WTC11 (cell line): ENCODE measurements at regions of chr3 and their contacts with region 1.

Region 1: DNA sequence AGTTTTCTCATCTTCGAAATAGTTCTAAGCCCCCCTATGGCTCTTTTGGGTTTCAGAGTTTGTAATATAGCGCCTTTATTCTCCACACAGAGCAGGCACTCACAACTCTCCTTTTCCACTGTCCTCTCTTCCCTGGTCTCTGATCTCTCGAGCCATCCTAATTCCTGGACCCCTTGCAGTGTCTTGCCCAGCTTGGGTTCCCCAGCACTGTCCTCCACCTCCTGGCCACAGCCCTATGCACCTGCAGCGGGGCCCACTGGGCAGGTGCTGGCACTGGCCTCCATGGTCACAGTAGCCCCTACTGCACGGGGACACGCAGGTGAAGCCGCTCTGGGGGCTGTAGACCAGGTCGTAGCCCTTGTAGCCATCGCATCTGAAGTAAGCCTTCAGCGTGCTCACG is 27.9 kb downstream of the MUC20 start:
- DNase-seq: no peak
- ATAC-seq: no peak
- H3K4me3 Mint-ChIP-seq: no peak overlapping the region
- H3K27ac Mint-ChIP-seq: no peak overlapping the region
- H3K4me1 Mint-ChIP-seq: no peaks in the 10 kb centered on the region
- H3K27me3 Mint-ChIP-seq: peaks cover 50% of the 10 kb centered on the region
- CTCF ChIP-seq: no peak

Region 2: DNA sequence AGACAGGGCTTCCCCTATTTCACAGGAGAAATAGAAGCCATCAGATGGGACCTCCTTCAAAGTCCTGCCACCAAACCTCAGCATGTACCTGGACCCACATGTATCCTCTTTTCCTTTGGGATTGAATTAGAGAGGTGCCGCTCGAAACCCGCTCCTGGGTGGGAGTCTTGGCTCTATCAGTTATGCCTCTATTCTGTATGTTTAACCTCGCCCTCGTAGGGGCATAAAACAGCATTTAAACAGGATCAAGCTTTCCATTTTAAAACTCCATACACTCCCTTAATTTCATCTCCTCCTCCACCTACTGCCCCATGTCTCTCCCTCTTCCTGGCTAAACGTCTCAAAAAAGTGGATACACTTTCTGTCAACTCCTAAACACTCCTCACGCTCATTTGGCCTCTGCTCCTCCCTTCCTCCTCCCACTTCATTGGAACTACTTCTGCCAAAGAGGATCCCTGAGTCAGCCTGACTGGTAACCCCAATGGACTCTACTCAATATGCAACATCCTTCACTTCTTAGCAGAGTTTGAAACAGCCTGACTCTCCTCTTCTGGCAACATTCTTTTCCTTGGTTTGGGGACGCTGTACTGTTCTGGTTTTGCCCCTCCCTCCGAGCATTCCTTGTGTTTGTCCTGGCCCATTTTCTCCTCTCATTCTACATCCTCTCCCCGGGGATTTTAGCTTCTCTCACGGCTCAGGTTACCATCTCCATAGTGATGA is 50.9 kb before region 1 on chr3:
- CTCF ChIA-PET with region 1: interaction called, 10 read pairs
- POLR2A ChIA-PET with region 1: no interaction called
- DNase-seq: no peak
- ATAC-seq: peak; percentile 69
- H3K4me3 Mint-ChIP-seq: peak overlapping the region; percentile 29
- H3K27ac Mint-ChIP-seq: peak overlapping the region; percentile 69
- H3K4me1 Mint-ChIP-seq: peaks cover 29% of the 10 kb centered on the region
- H3K27me3 Mint-ChIP-seq: no peaks in the 10 kb centered on the region; the same call in 1 of the 2 replicates
- CTCF ChIP-seq: no peak

Region 3: GRCh38 chr3:195716865-195717210 is 31.8 kb before region 1 on chr3:
- CTCF ChIA-PET with region 1: interaction called, 18 read pairs
- POLR2A ChIA-PET with region 1: no interaction called
- DNase-seq: no peak
- ATAC-seq: no peak
- H3K4me3 Mint-ChIP-seq: no peak overlapping the region
- H3K27ac Mint-ChIP-seq: no peak overlapping the region
- H3K4me1 Mint-ChIP-seq: peaks cover 36% of the 10 kb centered on the region
- H3K27me3 Mint-ChIP-seq: peaks cover 6% of the 10 kb centered on the region
- CTCF ChIP-seq: no peak

Region 4: GRCh38 chr3:195729476-195730251 is 19.0 kb before region 1 on chr3:
- CTCF ChIA-PET with region 1: interaction called, 10 read pairs
- POLR2A ChIA-PET with region 1: no interaction called
- DNase-seq: no peak
- ATAC-seq: peak; percentile 28; the same call in 1 of the 2 replicates
- H3K4me3 Mint-ChIP-seq: no peak overlapping the region
- H3K27ac Mint-ChIP-seq: no peak overlapping the region
- H3K4me1 Mint-ChIP-seq: no peaks in the 10 kb centered on the region
- H3K27me3 Mint-ChIP-seq: peaks cover 7% of the 10 kb centered on the region
- CTCF ChIP-seq: no peak

Region 5: DNA sequence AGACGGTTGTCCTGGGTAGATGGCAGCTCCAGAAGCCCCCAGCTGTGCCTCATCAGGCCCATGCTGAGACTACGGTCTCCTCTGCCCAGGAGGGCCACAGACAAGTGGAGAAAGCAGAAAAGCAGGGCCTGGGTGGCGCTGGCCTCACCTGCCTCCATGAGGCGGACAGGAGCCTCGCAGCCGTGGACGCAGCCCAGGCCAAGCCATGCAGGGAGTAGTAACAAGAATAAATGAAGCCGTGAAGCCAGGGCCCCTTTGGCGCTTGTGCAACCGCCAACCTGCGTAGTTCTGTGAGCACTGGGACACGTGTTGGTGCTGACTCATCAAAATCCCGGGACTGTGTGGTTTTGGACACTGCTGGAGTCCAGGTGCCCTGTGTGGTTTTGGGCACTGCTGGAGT is 75.3 kb after region 1 on chr3:
- CTCF ChIA-PET with region 1: no interaction called
- POLR2A ChIA-PET with region 1: no interaction called
- DNase-seq: no peak
- ATAC-seq: peak; percentile 61
- H3K4me3 Mint-ChIP-seq: no peak overlapping the region
- H3K27ac Mint-ChIP-seq: no peak overlapping the region
- H3K4me1 Mint-ChIP-seq: peaks cover 6% of the 10 kb centered on the region; the same call in 1 of the 2 replicates
- H3K27me3 Mint-ChIP-seq: no peaks in the 10 kb centered on the region
- CTCF ChIP-seq: no peak